ENCODE measurements at regions of chr1 and their contacts with region 1.

Region 1: GRCh38 chr1:223087291-223088255 is 55.5 kb downstream of the TLR5 start:
- DNase-seq: no peak
- ATAC-seq: no peak
- H3K4me3 Mint-ChIP-seq: no peak overlapping the region
- H3K27ac Mint-ChIP-seq: no peak overlapping the region
- H3K4me1 Mint-ChIP-seq: peaks cover 6% of the 10 kb centered on the region
- H3K27me3 Mint-ChIP-seq: no peaks in the 10 kb centered on the region

Region 2: DNA sequence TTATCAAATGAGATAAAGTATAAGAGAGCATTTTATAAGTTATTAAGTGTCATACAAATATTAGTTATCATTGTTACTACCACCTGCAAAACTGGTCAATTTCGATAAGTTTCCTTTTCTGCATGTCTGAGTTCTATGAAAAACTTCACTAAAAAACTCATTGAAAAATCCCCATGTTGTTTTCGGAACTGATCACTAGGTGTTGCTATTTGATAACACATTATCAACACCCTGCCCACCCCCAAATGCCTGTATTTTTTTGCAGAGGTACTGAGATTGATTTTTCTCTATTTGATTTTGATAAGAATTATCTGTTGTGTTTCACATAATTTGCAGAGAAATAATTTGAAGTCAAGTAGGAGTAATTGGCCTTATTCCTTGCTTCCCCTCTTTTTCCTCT is 294.8 kb before region 1 on chr1:
- CTCF ChIA-PET with region 1: interaction called, 16 read pairs
- POLR2A ChIA-PET with region 1: no interaction called
- DNase-seq: no peak
- ATAC-seq: no peak
- H3K4me3 Mint-ChIP-seq: no peak overlapping the region
- H3K27ac Mint-ChIP-seq: no peak overlapping the region
- H3K4me1 Mint-ChIP-seq: peaks cover 10% of the 10 kb centered on the region
- H3K27me3 Mint-ChIP-seq: no peaks in the 10 kb centered on the region

Region 3: GRCh38 chr1:223074445-223075300 is 12.9 kb before region 1 on chr1:
- CTCF ChIA-PET with region 1: no interaction called
- POLR2A ChIA-PET with region 1: no interaction called
- DNase-seq: no peak
- ATAC-seq: no peak
- H3K4me3 Mint-ChIP-seq: no peak overlapping the region
- H3K27ac Mint-ChIP-seq: no peak overlapping the region
- H3K4me1 Mint-ChIP-seq: no peaks in the 10 kb centered on the region
- H3K27me3 Mint-ChIP-seq: peaks cover 3% of the 10 kb centered on the region

Region 4: GRCh38 chr1:223097713-223098112 is 10.1 kb after region 1 on chr1:
- CTCF ChIA-PET with region 1: interaction called, 10 read pairs
- POLR2A ChIA-PET with region 1: no interaction called
- DNase-seq: no peak
- ATAC-seq: no peak
- H3K4me3 Mint-ChIP-seq: no peak overlapping the region
- H3K27ac Mint-ChIP-seq: no peak overlapping the region
- H3K4me1 Mint-ChIP-seq: no peaks in the 10 kb centered on the region
- H3K27me3 Mint-ChIP-seq: peaks cover 6% of the 10 kb centered on the region

Region 5: GRCh38 chr1:223116950-223117349 is 29.4 kb after region 1 on chr1:
- CTCF ChIA-PET with region 1: no interaction called
- POLR2A ChIA-PET with region 1: no interaction called
- DNase-seq: no peak
- ATAC-seq: no peak
- H3K4me3 Mint-ChIP-seq: no peak overlapping the region
- H3K27ac Mint-ChIP-seq: no peak overlapping the region
- H3K4me1 Mint-ChIP-seq: no peaks in the 10 kb centered on the region
- H3K27me3 Mint-ChIP-seq: no peaks in the 10 kb centered on the region